Cardiac septum (tissue), 1 donor: ENCODE measurements at regions of chr19 and their contacts with region 1.

Region 1: DNA sequence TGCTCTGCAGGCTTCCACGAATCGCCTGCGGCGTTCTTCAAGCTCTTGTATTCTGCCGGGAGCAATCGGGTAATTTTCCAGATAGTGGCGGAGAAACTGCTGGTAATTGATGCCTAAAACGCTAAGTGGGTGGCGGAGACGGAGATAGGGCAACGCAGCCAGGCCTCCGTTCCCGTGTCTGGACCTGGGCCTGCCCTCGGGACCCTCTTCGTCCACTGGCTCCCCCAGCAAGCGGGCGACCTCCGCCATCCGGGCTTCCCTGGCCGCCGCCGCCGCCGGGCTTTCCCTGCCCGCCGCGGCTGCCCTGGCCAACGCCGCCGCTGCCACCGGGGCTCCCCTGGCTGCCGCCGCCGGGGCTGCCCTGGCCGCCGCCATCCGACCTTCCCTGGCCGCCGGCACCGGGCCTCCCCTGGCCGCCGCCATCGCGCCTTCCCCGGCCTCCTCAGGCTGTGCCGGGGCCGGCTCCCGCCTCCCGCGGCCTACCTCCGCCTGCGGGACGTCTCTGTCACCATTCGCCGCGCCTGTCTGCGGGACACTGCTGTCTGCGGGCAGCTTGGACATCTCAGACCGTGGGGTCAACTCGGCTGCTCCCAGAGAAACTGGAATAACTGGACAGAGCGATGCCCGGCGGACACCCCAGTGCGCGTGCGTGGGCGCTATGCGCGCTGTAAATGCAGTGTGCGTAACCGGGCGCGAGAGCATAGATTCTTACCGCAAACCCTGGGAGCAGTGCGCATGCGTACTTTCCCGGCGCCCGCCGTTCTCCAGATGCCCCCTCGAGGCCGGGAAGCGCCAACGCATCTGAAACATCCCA is at the start of gene EID2:
- DNase-seq: peak; percentile 96
- total RNA-seq, gene EID2: 11.4 TPM

Region 2: DNA sequence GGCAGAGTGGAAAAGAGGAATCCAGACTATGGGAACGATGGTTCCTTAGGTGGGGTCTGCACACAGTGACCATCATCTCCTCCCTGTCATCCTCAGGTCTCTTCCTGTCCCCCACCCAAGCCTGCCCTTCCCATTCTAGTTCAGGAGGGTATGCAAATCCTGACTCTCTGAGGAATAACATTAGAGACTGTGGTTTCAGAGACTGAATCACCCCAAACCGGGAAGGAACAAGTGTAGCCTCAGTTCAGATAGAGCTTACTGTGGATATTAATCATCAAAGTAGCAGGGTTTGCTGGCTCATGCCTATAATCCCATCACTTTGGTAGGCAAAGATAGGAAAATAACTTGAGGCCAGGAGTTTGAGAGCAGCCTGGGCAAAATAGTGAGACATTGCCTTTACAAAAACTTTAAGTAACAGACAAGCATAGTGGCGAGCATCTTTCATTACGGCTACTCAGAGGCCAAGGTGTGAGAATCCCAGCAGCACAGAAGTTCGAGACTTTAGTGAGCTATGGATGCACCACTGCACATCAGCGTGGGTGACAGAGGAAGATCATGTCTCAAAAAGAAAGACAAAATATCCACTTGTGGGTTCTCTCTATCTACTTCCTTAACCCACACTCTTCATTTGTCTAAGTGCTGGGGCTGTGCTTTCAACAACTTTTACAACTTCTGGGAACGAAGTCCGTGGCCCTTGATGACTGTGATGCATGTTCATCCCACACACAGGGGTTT is 43.3 kb after region 1 on chr19:
- intact Hi-C with region 1: no loop called
- DNase-seq: no peak

Region 3: GRCh38 chr19:39833464-39834286 is 293.9 kb after region 1 on chr19 and contains the start of gene DYRK1B:
- intact Hi-C with region 1: loop called (anchors 10 kb)
- DNase-seq: peak; percentile 98
- total RNA-seq, gene DYRK1B: 31.2 TPM